ENCODE measurements at regions of chr4 and their contacts with region 1.

Region 1: DNA sequence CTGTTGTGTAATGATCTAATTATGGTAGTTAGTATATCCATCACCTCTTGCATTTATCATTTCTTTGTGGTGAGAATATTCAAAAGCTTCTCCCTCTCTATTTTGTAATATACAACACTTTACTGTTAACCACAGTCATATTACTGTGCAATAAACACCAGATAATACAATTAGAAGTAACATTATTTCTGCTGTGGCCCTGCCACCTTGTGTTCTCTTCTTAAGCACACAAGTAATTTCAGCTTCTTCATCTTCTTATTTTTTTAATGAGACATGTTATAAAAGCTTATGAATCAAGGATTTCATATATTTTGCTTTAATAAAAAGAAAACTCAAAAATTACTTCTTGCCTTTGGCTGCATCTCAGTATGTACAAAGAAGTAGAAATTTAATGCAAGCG is 675.2 kb upstream of the INTU start:
- DNase-seq: peak in 1 of 4 experiments; percentile 45
- ATAC-seq: no peak
- H3K4me3 ChIP-seq: peak overlapping the region; percentile 50
- H3K27ac ChIP-seq: peak overlapping the region; percentile 72; the same call in 2 of the 3 replicates
- H3K4me1 ChIP-seq: peaks cover 0 to 11% of the 10 kb centered on the region in 2 experiments; a peak in 1 of 5 replicates
- H3K27me3 ChIP-seq: no peaks in the 10 kb centered on the region
- CTCF ChIP-seq: peak in 1 of 3 experiments; percentile 31; a peak in 1 of 6 replicates
- EP300 ChIP-seq: no peak
- POLR2A ChIP-seq: no peak
- RAD21 ChIP-seq: peak in 1 of 2 experiments; percentile 50; a peak in 2 of 4 replicates

Region 2: GRCh38 chr4:126552321-126552720 is 405.2 kb before region 1 on chr4:
- CTCF ChIA-PET with region 1: no interaction called
- POLR2A ChIA-PET with region 1: no interaction called
- in situ Hi-C with region 1: no loop called
- intact Hi-C with region 1: loop called (anchors 5 kb)
- DNase-seq: no peak
- ATAC-seq: no peak
- H3K4me3 ChIP-seq: no peak overlapping the region
- H3K27ac ChIP-seq: no peak overlapping the region
- H3K4me1 ChIP-seq: peaks cover 0 to 7% of the 10 kb centered on the region in 2 experiments; a peak in 2 of 5 replicates
- H3K27me3 ChIP-seq: no peaks in the 10 kb centered on the region
- CTCF ChIP-seq: no peak
- EP300 ChIP-seq: no peak
- POLR2A ChIP-seq: no peak
- RAD21 ChIP-seq: no peak

Region 3: GRCh38 chr4:126627255-126627654 is 330.3 kb before region 1 on chr4:
- CTCF ChIA-PET with region 1: no interaction called
- POLR2A ChIA-PET with region 1: no interaction called
- in situ Hi-C with region 1: no loop called
- intact Hi-C with region 1: loop called (anchors 5 kb)
- DNase-seq: peak in 2 of 4 experiments; percentile 17 to 49
- ATAC-seq: peak; percentile 84
- H3K4me3 ChIP-seq: no peak overlapping the region
- H3K27ac ChIP-seq: no peak overlapping the region
- H3K4me1 ChIP-seq: no peaks in the 10 kb centered on the region
- H3K27me3 ChIP-seq: no peaks in the 10 kb centered on the region
- CTCF ChIP-seq: peak; percentile 19 to 48 (median 48); a peak in 5 of 6 replicates
- EP300 ChIP-seq: no peak
- POLR2A ChIP-seq: no peak
- RAD21 ChIP-seq: peak in 1 of 2 experiments; percentile 43; a peak in 2 of 4 replicates

Region 4: GRCh38 chr4:126775485-126776106 is 182.0 kb before region 1 on chr4:
- CTCF ChIA-PET with region 1: no interaction called
- POLR2A ChIA-PET with region 1: interaction called, 8 read pairs
- in situ Hi-C with region 1: no loop called
- intact Hi-C with region 1: loop called (anchors 2 kb)
- DNase-seq: peak in 1 of 4 experiments; percentile 77
- ATAC-seq: peak; percentile 53
- H3K4me3 ChIP-seq: peak overlapping the region; percentile 32
- H3K27ac ChIP-seq: peak overlapping the region; percentile 90
- H3K4me1 ChIP-seq: peaks cover 7 to 14% of the 10 kb centered on the region in 2 experiments
- H3K27me3 ChIP-seq: no peaks in the 10 kb centered on the region
- CTCF ChIP-seq: no peak
- EP300 ChIP-seq: peak; percentile 73; the same call in 1 of the 2 replicates
- POLR2A ChIP-seq: no peak; the same call in 1 of the 2 replicates
- RAD21 ChIP-seq: no peak

Region 5: GRCh38 chr4:126850286-126850685 is 107.3 kb before region 1 on chr4:
- CTCF ChIA-PET with region 1: no interaction called
- POLR2A ChIA-PET with region 1: no interaction called
- in situ Hi-C with region 1: no loop called
- intact Hi-C with region 1: loop called (anchors 5 kb)
- DNase-seq: peak; percentile 68 to 91 (median 76)
- ATAC-seq: peak; percentile 96
- H3K4me3 ChIP-seq: no peak overlapping the region
- H3K27ac ChIP-seq: peak overlapping the region; percentile 78
- H3K4me1 ChIP-seq: peaks cover 0 to 21% of the 10 kb centered on the region in 2 experiments; a peak in 4 of 5 replicates
- H3K27me3 ChIP-seq: no peaks in the 10 kb centered on the region
- CTCF ChIP-seq: no peak
- EP300 ChIP-seq: peak; percentile 97
- POLR2A ChIP-seq: no peak
- RAD21 ChIP-seq: peak in 1 of 2 experiments; percentile 11; a peak in 1 of 4 replicates

Region 6: DNA sequence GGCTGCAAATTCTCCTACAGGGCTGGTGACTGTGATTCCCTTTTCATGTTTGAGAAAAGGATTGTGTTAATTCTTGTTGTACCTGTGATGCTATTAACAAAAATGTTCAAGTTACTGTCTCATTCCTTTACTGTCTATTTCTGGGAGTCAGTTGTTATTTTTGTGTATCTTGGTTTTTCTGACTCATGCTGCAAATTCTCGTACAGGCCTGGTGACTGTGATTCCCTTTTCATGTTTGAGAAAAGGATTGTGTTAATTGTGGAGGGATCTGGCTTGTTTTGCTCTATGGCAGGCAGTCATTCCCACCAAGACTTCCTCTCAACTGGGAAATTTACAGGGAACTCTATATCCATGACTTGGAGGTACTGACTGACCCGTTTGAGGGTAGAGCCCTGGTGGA is 18.2 kb before region 1 on chr4:
- CTCF ChIA-PET with region 1: no interaction called
- POLR2A ChIA-PET with region 1: interaction called, 11 read pairs
- in situ Hi-C with region 1: no loop called
- intact Hi-C with region 1: no loop called
- DNase-seq: no peak
- ATAC-seq: peak; percentile 17; the same call in 2 of the 3 replicates
- H3K4me3 ChIP-seq: no peak overlapping the region
- H3K27ac ChIP-seq: no peak overlapping the region; the same call in 2 of the 3 replicates
- H3K4me1 ChIP-seq: no peaks in the 10 kb centered on the region
- H3K27me3 ChIP-seq: no peaks in the 10 kb centered on the region
- CTCF ChIP-seq: no peak
- EP300 ChIP-seq: no peak
- POLR2A ChIP-seq: no peak
- RAD21 ChIP-seq: no peak

Measured in K562 (cell line).